AG04449 (cell line): ENCODE measurements at regions of chr19 and their contacts with region 1.

Region 1: DNA sequence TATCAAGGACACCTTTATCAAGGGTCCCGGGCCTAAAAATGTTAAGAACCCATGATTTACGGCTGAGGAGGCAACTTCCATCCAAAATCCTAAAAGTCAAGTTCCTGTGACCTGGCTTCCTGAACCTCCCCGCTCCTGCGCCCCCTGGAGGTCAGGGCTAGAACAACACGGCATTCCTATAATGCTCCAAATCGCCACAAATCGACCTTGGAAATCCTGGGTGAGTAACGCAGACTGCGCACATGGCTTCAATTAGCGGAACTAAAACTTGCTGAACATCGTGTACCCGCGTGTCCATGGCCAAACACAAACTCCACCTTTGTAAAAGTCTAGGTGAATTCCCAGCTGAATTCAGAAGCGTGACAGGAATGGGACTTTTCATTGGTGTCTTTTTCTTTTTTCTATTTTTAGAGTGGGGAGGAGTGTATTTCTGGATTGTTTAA is 4.3 kb upstream of the C5AR1 start:
- DNase-seq: peak; percentile 41
- H3K4me3 ChIP-seq: peak overlapping the region; percentile 16; the same call in 1 of the 2 replicates
- CTCF ChIP-seq: peak; percentile 92

Region 2: GRCh38 chr19:47152224-47153017 is 152.9 kb before region 1 on chr19:
- CTCF ChIA-PET with region 1: no interaction called
- POLR2A ChIA-PET with region 1: no interaction called
- DNase-seq: no peak
- H3K4me3 ChIP-seq: no peak overlapping the region
- CTCF ChIP-seq: no peak

Region 3: GRCh38 chr19:47257444-47258169 is 47.7 kb before region 1 on chr19:
- CTCF ChIA-PET with region 1: no interaction called
- POLR2A ChIA-PET with region 1: no interaction called
- DNase-seq: no peak
- H3K4me3 ChIP-seq: peak overlapping the region; percentile 71
- CTCF ChIP-seq: no peak

Region 4: GRCh38 chr19:47268028-47268427 is 37.3 kb before region 1 on chr19:
- CTCF ChIA-PET with region 1: no interaction called
- POLR2A ChIA-PET with region 1: no interaction called
- DNase-seq: no peak
- H3K4me3 ChIP-seq: no peak overlapping the region
- CTCF ChIP-seq: no peak

Region 5: GRCh38 chr19:47324502-47324901 is 19.2 kb after region 1 on chr19:
- CTCF ChIA-PET with region 1: interaction called, 11 read pairs
- POLR2A ChIA-PET with region 1: no interaction called
- DNase-seq: no peak
- H3K4me3 ChIP-seq: no peak overlapping the region
- CTCF ChIP-seq: no peak

Region 6: DNA sequence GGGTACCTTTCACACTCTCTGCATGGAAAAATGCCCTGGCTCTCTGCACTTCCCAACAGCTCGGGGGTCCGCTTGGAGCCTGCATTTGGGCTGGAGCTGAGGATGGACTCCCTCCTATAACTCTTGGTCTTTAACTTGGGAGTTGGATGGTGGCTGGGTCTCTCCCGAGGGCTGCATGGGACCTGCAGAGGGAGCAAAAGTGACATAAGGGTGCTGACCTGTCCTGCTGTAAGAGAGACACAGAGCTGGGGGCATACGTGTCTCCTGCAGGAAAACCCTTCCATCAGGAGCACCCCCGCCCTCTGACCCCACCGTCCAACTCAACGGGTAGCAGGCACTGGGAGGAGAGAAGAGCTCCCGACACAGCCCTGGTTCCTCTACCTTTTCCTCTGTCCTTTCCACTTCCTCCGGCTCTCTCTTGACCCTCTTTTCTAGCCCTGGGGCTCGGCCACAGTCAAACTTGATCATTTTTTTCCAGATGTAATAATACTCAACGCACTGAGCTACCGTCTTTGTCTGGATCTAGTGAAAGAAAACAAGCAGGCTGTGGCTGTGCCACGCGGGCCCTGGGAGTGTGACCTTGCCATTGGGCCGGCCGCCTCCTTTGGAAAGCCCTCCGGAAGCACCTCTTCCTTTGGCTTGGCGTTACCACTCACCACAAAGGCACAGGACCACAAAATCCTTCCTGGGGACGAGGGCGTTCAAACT is 216.3 kb after region 1 on chr19:
- CTCF ChIA-PET with region 1: no interaction called
- POLR2A ChIA-PET with region 1: no interaction called
- DNase-seq: no peak
- H3K4me3 ChIP-seq: no peak overlapping the region
- CTCF ChIP-seq: no peak